ENCODE measurements at regions of chr1 and their contacts with region 1.

Region 1: DNA sequence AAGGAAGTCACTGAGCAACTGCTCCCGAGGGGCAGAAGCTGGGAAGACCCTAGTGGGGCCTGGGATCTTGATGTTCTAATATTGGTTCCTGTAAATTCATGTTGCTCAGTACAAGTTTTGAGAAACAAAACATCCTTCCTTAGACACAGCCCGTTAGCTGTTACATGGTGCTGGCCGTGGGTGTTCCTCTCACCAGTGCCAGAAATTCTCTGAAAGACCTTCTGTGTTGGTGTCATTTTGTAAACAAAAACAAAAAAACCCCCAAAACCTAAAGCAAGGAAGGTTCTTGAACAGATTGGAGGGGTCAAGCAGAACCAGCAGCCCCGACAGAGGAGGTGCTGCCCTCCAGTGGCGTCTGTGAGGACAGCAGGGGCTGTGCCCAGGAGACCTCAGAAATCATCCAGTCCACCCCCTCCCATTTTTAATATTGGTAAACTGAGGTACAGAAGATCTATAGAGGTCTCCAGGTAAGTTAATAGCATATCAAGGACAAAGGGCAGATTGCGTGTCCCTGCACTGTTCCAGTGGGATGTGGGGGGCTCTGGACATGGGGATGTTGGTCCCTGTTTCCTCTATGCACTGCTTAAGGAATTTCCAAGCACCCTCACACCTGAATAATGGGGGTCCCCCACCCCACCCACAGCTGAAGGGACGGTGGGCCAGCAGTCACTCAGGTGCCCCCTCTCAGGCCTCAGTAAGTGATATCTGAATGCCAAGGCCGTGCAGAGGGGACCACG is 38.2 kb downstream of the SLC2A7 start:
- DNase-seq: peak; percentile 59
- ATAC-seq: peak; percentile 91
- H3K4me3 Mint-ChIP-seq: no peak overlapping the region
- H3K27ac Mint-ChIP-seq: no peak overlapping the region
- H3K4me1 Mint-ChIP-seq: peaks cover 10% of the 10 kb centered on the region
- H3K27me3 Mint-ChIP-seq: peaks cover 11% of the 10 kb centered on the region
- CTCF ChIP-seq: peak; percentile 83

Region 2: GRCh38 chr1:8718850-8719361 is 269.1 kb before region 1 on chr1:
- CTCF ChIA-PET with region 1: no interaction called
- POLR2A ChIA-PET with region 1: no interaction called
- intact Hi-C with region 1: no loop called
- DNase-seq: no peak
- ATAC-seq: no peak
- H3K4me3 Mint-ChIP-seq: no peak overlapping the region
- H3K27ac Mint-ChIP-seq: no peak overlapping the region
- H3K4me1 Mint-ChIP-seq: peaks cover 69% of the 10 kb centered on the region
- H3K27me3 Mint-ChIP-seq: no peaks in the 10 kb centered on the region
- CTCF ChIP-seq: no peak

Region 3: DNA sequence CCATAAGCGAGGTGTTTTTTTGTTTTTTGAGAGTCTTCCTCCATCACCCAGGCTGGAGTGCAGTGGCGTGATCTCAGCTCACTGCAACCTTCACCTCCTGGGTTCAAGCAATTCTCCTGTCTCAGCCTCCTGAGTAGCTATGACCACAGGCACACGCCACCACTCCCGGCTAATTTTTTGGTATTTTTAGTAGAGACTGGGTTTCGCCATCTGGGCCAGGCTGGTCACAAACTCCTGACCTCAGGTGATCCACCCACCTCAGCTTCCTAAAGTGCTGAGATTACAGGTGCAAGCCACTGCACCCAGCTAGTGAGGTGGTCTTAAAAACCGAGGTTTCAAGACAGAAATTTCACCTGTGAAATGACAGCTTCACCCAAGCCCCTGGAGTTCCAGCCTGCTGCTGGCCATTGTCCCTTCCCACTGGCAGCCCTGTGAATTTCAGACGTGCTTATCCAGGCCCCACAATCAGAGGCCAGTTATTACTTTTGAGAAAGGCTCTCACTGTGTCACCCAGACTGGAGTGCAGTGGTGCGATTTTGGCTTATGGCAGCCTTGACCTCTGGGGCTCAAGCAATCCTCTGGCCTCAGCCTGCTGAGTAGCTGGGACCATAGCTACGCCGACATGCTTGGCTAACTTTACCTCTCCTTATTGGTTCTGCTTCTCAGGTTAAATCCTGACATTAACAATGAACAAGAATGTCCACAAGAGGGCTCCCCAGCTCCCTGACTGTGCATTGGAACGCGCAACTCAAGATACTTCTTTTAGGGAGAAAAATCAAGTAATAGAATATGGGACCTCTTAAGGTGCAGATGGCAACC is 129.0 kb before region 1 on chr1:
- CTCF ChIA-PET with region 1: interaction called, 12 read pairs
- POLR2A ChIA-PET with region 1: no interaction called
- intact Hi-C with region 1: loop called (anchors 1 kb)
- DNase-seq: no peak
- ATAC-seq: peak; percentile 80
- H3K4me3 Mint-ChIP-seq: no peak overlapping the region
- H3K27ac Mint-ChIP-seq: peak overlapping the region; percentile 13
- H3K4me1 Mint-ChIP-seq: peaks cover 21% of the 10 kb centered on the region
- H3K27me3 Mint-ChIP-seq: no peaks in the 10 kb centered on the region
- CTCF ChIP-seq: no peak

Region 4: DNA sequence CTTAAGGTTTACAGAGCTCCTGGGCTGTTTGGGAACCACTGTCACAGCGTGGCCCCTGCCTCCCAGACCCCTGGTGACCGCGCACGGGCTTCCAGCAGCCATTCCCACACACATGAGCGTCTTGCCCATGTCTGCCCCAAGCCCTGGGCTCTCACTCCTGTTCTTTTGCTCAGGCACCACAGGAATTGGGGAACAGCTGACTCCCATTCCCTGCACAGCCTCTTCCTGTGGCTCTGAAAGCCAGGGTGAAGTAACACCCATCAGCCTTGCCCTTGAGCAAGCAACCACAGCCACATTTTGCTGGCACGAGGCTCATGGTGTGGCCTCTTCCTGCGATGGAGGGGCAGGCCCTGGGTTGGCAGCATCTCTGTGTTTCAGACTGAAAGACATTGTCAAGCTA is 155.2 kb after region 1 on chr1:
- CTCF ChIA-PET with region 1: no interaction called
- POLR2A ChIA-PET with region 1: no interaction called
- intact Hi-C with region 1: no loop called
- DNase-seq: no peak
- ATAC-seq: no peak
- H3K4me3 Mint-ChIP-seq: no peak overlapping the region
- H3K27ac Mint-ChIP-seq: no peak overlapping the region
- H3K4me1 Mint-ChIP-seq: peaks cover 3% of the 10 kb centered on the region
- H3K27me3 Mint-ChIP-seq: peaks cover 4% of the 10 kb centered on the region
- CTCF ChIP-seq: no peak